Naive thymus-derived CD4-positive, alpha-beta T cell (primary cell): ENCODE measurements at regions of chr15 and their contacts with region 1.

Region 1: DNA sequence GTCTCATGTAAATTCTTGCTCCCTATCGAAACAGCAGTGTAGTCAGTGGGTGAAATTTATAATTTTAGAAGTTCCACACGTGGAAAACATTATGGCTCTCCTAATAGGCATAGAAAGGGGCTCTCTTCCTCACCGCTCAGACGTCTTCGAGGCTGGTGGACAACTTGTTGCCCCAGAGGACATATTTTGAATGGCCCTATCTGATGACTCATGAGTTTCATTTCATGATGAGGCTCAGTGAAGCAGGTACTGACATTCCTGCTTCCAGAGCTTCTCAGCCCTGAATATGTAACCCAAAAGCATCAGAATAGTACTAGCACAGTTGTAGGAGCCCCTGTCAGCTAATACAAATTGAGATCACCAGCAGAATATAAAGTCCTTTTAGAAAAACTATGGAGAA is 117.9 kb downstream of the HERC1 start:
- DNase-seq: no peak
- ATAC-seq: no peak
- H3K4me3 ChIP-seq: no peak overlapping the region
- H3K4me3 Mint-ChIP-seq: no peak overlapping the region
- H3K27ac ChIP-seq: no peak overlapping the region
- H3K27ac Mint-ChIP-seq: peak overlapping the region in 8 of 9 donors; percentile 38 to 91 (median 64)
- H3K4me1 ChIP-seq: peaks cover 0 to 7% of the 10 kb centered on the region in 2 donors
- H3K4me1 Mint-ChIP-seq: peaks cover 0 to 28% (median 15%) of the 10 kb centered on the region in 7 donors
- H3K27me3 ChIP-seq: no peaks in the 10 kb centered on the region
- H3K27me3 Mint-ChIP-seq: no peaks in the 10 kb centered on the region

Region 2: DNA sequence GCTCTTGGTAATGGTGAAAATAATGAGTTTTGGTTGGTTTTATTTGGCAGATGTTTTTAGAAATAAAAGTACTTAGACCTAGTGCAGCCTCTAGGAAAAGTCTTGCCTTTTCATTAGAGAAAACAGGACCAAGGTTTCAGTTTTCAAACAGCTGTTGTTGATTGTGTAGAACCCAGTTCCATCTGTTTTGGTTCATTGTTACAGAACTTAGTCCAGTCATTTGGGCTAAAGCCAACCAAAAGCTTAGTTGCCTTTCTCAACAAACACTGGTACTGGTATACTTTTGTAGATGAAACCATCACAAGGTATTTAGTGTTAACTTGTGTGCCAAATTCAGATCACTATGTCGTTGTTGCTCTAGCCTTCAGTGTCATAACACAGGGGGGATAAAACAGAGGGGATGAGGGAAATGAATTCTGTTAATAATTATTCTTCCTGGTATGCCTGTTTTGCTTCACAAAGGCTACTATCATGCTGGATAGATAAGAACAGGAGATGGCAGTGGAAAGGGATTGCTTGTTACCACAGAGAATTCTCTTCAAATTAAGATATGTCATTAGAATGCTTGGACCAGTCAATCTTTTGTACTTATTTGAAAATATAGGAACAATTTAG is 451.0 kb before region 1 on chr15:
- CTCF ChIA-PET with region 1: no interaction called
- POLR2A ChIA-PET with region 1: no interaction called
- intact Hi-C with region 1: no loop called
- DNase-seq: no peak
- ATAC-seq: no peak
- H3K4me3 ChIP-seq: no peak overlapping the region
- H3K4me3 Mint-ChIP-seq: no peak overlapping the region
- H3K27ac ChIP-seq: no peak overlapping the region
- H3K27ac Mint-ChIP-seq: peak overlapping the region in 4 of 9 donors; percentile 3 to 43 (median 19)
- H3K4me1 ChIP-seq: no peaks in the 10 kb centered on the region
- H3K4me1 Mint-ChIP-seq: peaks cover 0 to 11% (median 6%) of the 10 kb centered on the region in 7 donors
- H3K27me3 ChIP-seq: no peaks in the 10 kb centered on the region
- H3K27me3 Mint-ChIP-seq: no peaks in the 10 kb centered on the region

Region 3: GRCh38 chr15:63729115-63729884 is 13.5 kb after region 1 on chr15:
- CTCF ChIA-PET with region 1: no interaction called
- POLR2A ChIA-PET with region 1: no interaction called
- intact Hi-C with region 1: loop called in 1 of 2 experiments (anchors 2 kb)
- DNase-seq: peak in 1 of 9 donors; percentile 26
- ATAC-seq: no peak
- H3K4me3 ChIP-seq: no peak overlapping the region
- H3K4me3 Mint-ChIP-seq: no peak overlapping the region
- H3K27ac ChIP-seq: no peak overlapping the region
- H3K27ac Mint-ChIP-seq: peak overlapping the region in 6 of 9 donors; percentile 20 to 79 (median 30)
- H3K4me1 ChIP-seq: no peaks in the 10 kb centered on the region
- H3K4me1 Mint-ChIP-seq: peaks cover 3 to 25% (median 15%) of the 10 kb centered on the region in 7 donors
- H3K27me3 ChIP-seq: no peaks in the 10 kb centered on the region
- H3K27me3 Mint-ChIP-seq: no peaks in the 10 kb centered on the region

Region 4: GRCh38 chr15:64731012-64731806 is 1015.4 kb after region 1 on chr15:
- CTCF ChIA-PET with region 1: no interaction called
- POLR2A ChIA-PET with region 1: no interaction called
- intact Hi-C with region 1: no loop called
- DNase-seq: peak; percentile 65 to 86 (median 77)
- ATAC-seq: peak; percentile 87
- H3K4me3 ChIP-seq: no peak overlapping the region
- H3K4me3 Mint-ChIP-seq: peak overlapping the region in 2 of 10 donors; percentile 4 to 46
- H3K27ac ChIP-seq: no peak overlapping the region
- H3K27ac Mint-ChIP-seq: peak overlapping the region in 1 of 9 donors; percentile 57
- H3K4me1 ChIP-seq: no peaks in the 10 kb centered on the region
- H3K4me1 Mint-ChIP-seq: peaks cover 8 to 12% (median 10%) of the 10 kb centered on the region in 7 donors
- H3K27me3 ChIP-seq: no peaks in the 10 kb centered on the region
- H3K27me3 Mint-ChIP-seq: peaks cover 0 to 5% (median 4%) of the 10 kb centered on the region in 5 donors